Natural killer cell (primary cell): ENCODE measurements at regions of chr16 and their contacts with region 1.

Region 1: DNA sequence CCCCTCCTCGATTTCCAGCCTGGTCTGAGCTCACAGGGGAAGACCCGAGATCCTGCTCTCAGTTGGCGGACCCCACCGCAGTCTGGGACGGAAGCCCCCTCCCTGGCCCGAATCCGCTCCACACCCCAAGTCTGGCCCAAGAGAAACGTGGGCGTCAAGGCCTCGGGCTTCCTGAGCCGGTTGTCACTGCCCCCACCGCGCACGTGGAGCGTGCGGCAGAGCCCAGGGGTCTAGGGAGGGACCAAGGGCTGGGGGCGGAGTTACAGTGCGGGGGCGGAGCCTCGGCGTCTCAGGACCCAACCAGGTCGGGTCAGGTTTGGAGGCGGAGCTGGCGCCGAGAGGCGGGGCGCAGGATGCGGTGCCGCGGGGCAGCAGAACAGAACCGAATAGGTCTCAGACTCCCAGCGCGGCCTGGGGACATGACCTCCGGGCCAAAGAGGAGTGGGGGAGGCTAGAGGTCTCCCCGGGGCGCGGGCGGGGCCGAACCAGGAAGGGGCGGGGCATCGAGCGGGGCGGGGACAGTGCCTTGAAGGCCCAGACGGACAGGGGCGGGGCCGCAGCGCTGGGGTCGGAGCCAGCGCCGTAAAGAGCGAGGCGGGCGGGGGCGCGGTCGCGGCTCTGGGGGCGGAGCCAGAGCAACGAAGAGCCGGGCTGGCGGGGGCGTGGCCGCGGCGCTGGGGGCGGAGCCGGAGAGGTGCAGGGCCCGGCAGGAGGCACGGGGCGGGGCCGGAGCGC is 431 bp upstream of the ZFPM1 start:
- DNase-seq: peak; percentile 98 to 100
- ATAC-seq: peak; percentile 60 to 86 (median 70)
- H3K4me3 ChIP-seq: peak overlapping the region; percentile 60
- H3K4me3 Mint-ChIP-seq: peak overlapping the region; percentile 87
- H3K27ac ChIP-seq: peak overlapping the region; percentile 88
- H3K27ac Mint-ChIP-seq: peak overlapping the region; percentile 85 to 96
- H3K4me1 ChIP-seq: peaks cover 52% of the 10 kb centered on the region
- H3K4me1 Mint-ChIP-seq: peaks cover 26 to 47% of the 10 kb centered on the region in 2 donors
- H3K27me3 ChIP-seq: no peaks in the 10 kb centered on the region
- H3K27me3 Mint-ChIP-seq: no peaks in the 10 kb centered on the region
- CTCF ChIP-seq: no peak

Region 2: GRCh38 chr16:87950765-87951549 is 501.7 kb before region 1 on chr16 and contains the start of gene BANP:
- intact Hi-C with region 1: loop called (anchors 5 kb)
- DNase-seq: peak; percentile 95 to 99
- ATAC-seq: peak; percentile 86 to 96 (median 87)
- H3K4me3 ChIP-seq: peak within 1 kb of the TSS; percentile 91
- H3K4me3 Mint-ChIP-seq: peak within 1 kb of the TSS; percentile 96
- H3K27ac ChIP-seq: peak within 1 kb of the TSS; percentile 95
- H3K27ac Mint-ChIP-seq: peak within 1 kb of the TSS; percentile 97 to 98
- H3K4me1 ChIP-seq: peaks cover 44% of the 10 kb centered on the region
- H3K4me1 Mint-ChIP-seq: peaks cover 42 to 43% of the 10 kb centered on the region in 2 donors
- H3K27me3 ChIP-seq: no peaks in the 10 kb centered on the region
- H3K27me3 Mint-ChIP-seq: peaks cover 7 to 8% of the 10 kb centered on the region in 2 donors
- CTCF ChIP-seq: no peak
- total RNA-seq, gene BANP: 88.8 to 117 (median 117) TPM

Region 3: GRCh38 chr16:88415713-88416323 is 36.8 kb before region 1 on chr16:
- intact Hi-C with region 1: no loop called
- DNase-seq: no peak
- ATAC-seq: no peak
- H3K4me3 ChIP-seq: no peak overlapping the region
- H3K4me3 Mint-ChIP-seq: no peak overlapping the region
- H3K27ac ChIP-seq: no peak overlapping the region
- H3K27ac Mint-ChIP-seq: no peak overlapping the region
- H3K4me1 ChIP-seq: no peaks in the 10 kb centered on the region
- H3K4me1 Mint-ChIP-seq: no peaks in the 10 kb centered on the region
- H3K27me3 ChIP-seq: no peaks in the 10 kb centered on the region
- H3K27me3 Mint-ChIP-seq: no peaks in the 10 kb centered on the region
- CTCF ChIP-seq: no peak

Region 4: GRCh38 chr16:88437373-88437964 is 15.2 kb before region 1 on chr16:
- intact Hi-C with region 1: no loop called
- DNase-seq: peak; percentile 62 to 82
- ATAC-seq: peak; percentile 49 to 74 (median 74)
- H3K4me3 ChIP-seq: no peak overlapping the region
- H3K4me3 Mint-ChIP-seq: no peak overlapping the region
- H3K27ac ChIP-seq: no peak overlapping the region
- H3K27ac Mint-ChIP-seq: no peak overlapping the region
- H3K4me1 ChIP-seq: peaks cover 3% of the 10 kb centered on the region
- H3K4me1 Mint-ChIP-seq: peaks cover 0 to 13% of the 10 kb centered on the region in 2 donors
- H3K27me3 ChIP-seq: no peaks in the 10 kb centered on the region
- H3K27me3 Mint-ChIP-seq: no peaks in the 10 kb centered on the region
- CTCF ChIP-seq: peak; percentile 85

Region 5: DNA sequence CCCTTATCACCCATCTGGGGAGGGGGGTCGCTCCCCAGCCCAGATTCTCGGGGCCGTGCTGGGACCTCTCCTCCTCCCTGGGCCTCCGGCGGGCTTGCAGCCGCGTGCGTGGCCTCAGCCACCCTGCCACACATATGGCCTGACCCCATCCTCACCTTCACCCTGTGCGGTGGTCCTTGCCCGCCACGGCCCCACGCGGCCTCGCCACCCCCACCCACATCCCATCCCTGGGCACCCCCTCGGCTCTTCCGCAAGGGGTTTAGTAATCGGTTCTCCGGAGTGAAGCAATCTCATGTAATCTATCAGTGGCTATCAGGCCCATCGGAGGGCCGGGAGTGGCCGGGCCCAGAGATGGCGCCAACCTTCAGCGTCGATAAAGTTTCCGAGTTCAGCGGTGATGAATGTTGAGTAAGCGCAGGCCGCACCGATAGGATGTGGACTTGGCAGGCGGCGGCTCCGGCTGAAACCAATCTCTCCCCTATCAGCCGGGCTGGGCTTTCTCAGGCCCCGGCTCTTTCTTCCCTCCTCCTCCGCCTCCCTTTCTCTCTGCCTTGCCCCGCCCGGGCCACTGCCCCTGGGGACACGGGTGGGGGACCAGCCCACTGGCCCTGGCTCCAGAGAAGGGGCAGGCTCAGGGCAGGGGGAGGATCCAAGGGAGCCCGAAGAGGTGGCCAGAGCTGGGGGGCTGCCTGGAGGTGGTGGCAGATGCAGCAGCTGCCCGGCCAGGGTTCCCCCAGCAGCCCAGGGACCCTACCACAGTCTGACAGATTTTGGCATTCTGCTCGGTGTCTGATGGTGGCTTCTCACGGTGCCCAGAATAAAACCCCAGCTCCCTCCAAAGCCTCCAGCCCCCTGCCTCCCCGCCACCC is 21.3 kb after region 1 on chr16:
- intact Hi-C with region 1: loop called (anchors 2 kb)
- DNase-seq: no peak
- ATAC-seq: no peak
- H3K4me3 ChIP-seq: no peak overlapping the region
- H3K4me3 Mint-ChIP-seq: no peak overlapping the region
- H3K27ac ChIP-seq: no peak overlapping the region
- H3K27ac Mint-ChIP-seq: peak overlapping the region in 1 of 2 donors; percentile 94
- H3K4me1 ChIP-seq: peaks cover 98% of the 10 kb centered on the region
- H3K4me1 Mint-ChIP-seq: peaks cover 54 to 75% of the 10 kb centered on the region in 2 donors
- H3K27me3 ChIP-seq: no peaks in the 10 kb centered on the region
- H3K27me3 Mint-ChIP-seq: no peaks in the 10 kb centered on the region
- CTCF ChIP-seq: no peak

Region 6: DNA sequence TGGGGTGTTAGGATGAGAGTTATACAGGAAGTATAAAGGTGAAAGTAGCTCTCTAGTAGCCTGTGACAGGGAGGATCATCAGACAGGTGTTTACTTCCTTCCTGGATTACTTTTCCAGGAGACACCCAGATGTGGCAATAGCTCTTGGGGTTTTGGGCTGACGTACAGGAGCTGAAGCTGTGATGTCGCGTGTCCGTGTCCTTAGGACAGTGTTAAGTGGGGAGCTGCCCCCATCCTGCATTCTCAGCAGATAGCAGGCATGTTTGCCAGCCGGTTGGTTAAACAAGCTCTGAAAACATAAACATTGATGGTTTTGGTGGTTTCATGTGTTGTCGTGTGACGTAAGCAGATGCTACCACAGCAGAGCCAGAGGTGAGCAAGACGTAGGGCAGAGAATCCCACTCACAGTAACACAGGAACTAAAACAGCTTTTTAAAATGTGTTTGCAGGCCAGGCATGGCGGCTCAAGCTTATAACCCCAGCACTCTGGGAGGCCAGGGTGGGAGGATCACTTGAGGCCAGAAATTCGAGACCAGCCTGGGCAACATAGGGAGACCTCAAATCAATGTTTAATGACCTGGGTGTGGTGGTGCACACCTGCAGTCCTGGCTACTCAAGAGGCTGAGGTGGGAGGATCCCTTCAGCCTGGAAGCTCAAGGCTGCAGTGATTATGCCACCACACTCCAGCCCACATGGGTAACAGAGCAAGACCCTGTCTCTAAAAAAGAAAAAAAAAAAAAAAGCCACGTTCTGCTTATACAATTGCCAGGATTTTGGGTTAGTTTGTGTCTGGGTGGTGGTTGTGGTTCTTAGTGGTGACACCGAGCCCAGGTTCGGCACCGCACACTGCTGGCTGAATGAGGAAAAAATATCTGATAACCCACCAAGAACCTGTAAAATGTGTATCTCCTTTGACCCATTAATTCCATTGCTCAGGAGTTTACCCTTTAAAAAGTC is 167.5 kb after region 1 on chr16:
- intact Hi-C with region 1: loop called (anchors 1 kb)
- DNase-seq: peak; percentile 78 to 94
- ATAC-seq: peak; percentile 80 to 92 (median 87)
- H3K4me3 ChIP-seq: no peak overlapping the region
- H3K4me3 Mint-ChIP-seq: peak overlapping the region; percentile 77
- H3K27ac ChIP-seq: peak overlapping the region; percentile 93
- H3K27ac Mint-ChIP-seq: peak overlapping the region; percentile 96 to 97
- H3K4me1 ChIP-seq: peaks cover 47% of the 10 kb centered on the region
- H3K4me1 Mint-ChIP-seq: peaks cover 29 to 50% of the 10 kb centered on the region in 2 donors
- H3K27me3 ChIP-seq: no peaks in the 10 kb centered on the region
- H3K27me3 Mint-ChIP-seq: no peaks in the 10 kb centered on the region
- CTCF ChIP-seq: no peak

Region 7: GRCh38 chr16:88639231-88640038 is 186.8 kb after region 1 on chr16:
- intact Hi-C with region 1: loop called (anchors 5 kb)
- DNase-seq: peak; percentile 37 to 40
- ATAC-seq: peak in 1 of 3 donors; percentile 7
- H3K4me3 ChIP-seq: no peak overlapping the region
- H3K4me3 Mint-ChIP-seq: peak overlapping the region; percentile 64
- H3K27ac ChIP-seq: no peak overlapping the region
- H3K27ac Mint-ChIP-seq: peak overlapping the region; percentile 72 to 90
- H3K4me1 ChIP-seq: peaks cover 80% of the 10 kb centered on the region
- H3K4me1 Mint-ChIP-seq: peaks cover 31 to 67% of the 10 kb centered on the region in 2 donors
- H3K27me3 ChIP-seq: no peaks in the 10 kb centered on the region
- H3K27me3 Mint-ChIP-seq: peaks cover 0 to 3% of the 10 kb centered on the region in 2 donors
- CTCF ChIP-seq: no peak

Region 8: GRCh38 chr16:88700636-88701482 is 248.2 kb after region 1 on chr16:
- intact Hi-C with region 1: loop called (anchors 5 kb)
- DNase-seq: peak; percentile 95 to 96
- ATAC-seq: peak; percentile 76 to 92 (median 82)
- H3K4me3 ChIP-seq: peak overlapping the region; percentile 67
- H3K4me3 Mint-ChIP-seq: peak overlapping the region; percentile 94
- H3K27ac ChIP-seq: peak overlapping the region; percentile 83
- H3K27ac Mint-ChIP-seq: peak overlapping the region; percentile 89 to 96
- H3K4me1 ChIP-seq: peaks cover 84% of the 10 kb centered on the region
- H3K4me1 Mint-ChIP-seq: peaks cover 53 to 70% of the 10 kb centered on the region in 2 donors
- H3K27me3 ChIP-seq: no peaks in the 10 kb centered on the region
- H3K27me3 Mint-ChIP-seq: no peaks in the 10 kb centered on the region
- CTCF ChIP-seq: no peak

Region 9: DNA sequence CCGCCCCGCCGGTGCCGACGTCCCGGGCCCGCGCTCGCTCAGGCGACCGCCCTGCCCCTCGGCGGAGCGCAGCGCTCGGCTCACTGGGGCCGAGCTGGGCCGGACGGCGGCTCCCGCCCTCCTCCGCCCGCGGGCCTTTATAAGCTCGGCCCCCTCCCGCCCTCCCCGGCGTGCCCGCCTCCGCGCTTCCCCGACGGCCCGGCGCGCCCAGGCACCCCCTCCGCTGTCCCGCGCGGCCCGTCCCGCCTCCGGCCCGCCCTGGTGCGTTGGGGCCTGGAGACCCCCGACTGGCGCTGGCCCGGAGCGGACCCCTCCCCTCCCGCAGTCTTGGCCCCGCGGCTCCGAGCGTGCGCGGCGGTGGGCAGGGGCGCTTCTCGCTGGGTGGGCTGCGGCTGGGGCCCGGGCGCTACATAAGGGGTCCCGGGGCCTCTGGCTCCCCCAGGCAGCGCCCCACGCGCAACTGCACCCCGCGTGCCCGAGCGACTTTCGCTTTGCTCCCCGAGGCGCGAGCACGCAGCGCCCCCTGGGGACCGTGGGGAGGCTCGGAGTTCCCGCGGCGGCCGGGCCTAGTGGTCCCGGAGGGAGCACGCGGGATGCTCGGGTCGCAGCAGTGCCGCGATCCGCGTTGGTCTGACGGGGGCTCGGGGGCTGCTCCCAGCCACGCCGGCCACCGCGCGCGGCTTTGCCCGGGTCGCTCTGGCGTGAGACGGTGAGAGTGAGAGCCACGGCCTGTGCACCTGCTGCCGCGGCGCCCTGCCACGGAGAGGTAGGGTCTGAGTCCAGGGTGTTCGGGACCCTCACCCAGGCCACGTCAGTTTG is 332.7 kb after region 1 on chr16 and contains the start of gene PIEZO1:
- intact Hi-C with region 1: loop called (anchors 10 kb)
- DNase-seq: peak; percentile 85 to 94
- ATAC-seq: peak; percentile 60 to 83 (median 75)
- H3K4me3 ChIP-seq: peak within 1 kb of the TSS; percentile 53
- H3K4me3 Mint-ChIP-seq: peak within 1 kb of the TSS; percentile 86
- H3K27ac ChIP-seq: peak within 1 kb of the TSS; percentile 78
- H3K27ac Mint-ChIP-seq: peak within 1 kb of the TSS; percentile 82 to 91
- H3K4me1 ChIP-seq: peaks cover 61% of the 10 kb centered on the region
- H3K4me1 Mint-ChIP-seq: peaks cover 44 to 50% of the 10 kb centered on the region in 2 donors
- H3K27me3 ChIP-seq: no peaks in the 10 kb centered on the region
- H3K27me3 Mint-ChIP-seq: no peaks in the 10 kb centered on the region
- CTCF ChIP-seq: peak; percentile 97
- total RNA-seq, gene PIEZO1: 172 to 197 (median 183) TPM